ENCODE measurements at regions of chr12 and their contacts with region 1.

Region 1: GRCh38 chr12:47904713-47905310 is at the start of gene VDR:
- DNase-seq: peak; percentile 90 to 91 (median 91)
- ATAC-seq: peak; percentile 70
- H3K4me3 ChIP-seq: peak within 1 kb of the TSS; percentile 36
- H3K4me1 ChIP-seq: peaks cover 53% of the 10 kb centered on the region
- CTCF ChIP-seq: no peak
- total RNA-seq, gene VDR: 69.5 to 175 (median 162) TPM

Region 2: DNA sequence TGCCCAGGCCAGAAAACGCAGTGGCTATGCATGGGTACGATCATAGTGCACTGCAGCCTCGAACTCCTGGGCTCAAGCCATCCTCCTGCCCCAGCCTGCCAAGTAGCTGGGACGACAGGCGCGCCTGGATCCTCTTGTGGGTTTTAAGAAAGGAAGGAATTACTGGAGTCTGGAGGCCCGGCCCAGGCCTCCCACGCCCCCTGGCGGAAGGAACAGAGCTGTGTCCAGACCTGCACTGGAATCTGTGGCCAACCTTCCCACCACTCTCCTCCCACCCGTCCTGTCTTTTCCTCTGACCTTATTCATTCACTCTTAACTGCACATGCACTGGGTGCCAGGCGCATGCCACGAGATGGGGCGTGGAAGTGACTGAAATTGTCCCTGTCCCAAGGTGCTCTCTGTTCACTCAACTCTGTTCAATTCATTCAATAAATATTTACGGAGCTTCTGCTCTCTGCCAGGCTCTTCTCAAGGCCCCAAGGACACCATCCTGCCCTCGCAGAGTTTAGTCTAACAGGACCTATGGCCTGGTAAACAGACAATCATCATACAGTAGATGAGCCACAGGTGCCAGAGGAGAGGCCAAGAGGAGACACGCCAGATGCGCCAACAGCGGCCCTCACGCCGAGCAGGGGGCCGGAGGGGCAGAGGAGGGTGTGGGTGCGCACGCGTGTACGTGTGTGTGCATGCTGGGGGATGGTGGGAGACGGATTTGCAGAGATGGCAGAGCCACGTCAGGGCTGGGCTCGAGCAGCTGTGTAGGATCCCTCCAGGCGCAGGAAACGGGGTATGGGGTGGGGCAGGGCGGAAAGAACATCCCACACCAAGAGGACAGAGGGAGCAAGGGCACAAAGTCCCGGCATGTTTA is 44.9 kb after region 1 on chr12:
- intact Hi-C with region 1: loop called in 1 of 2 experiments (anchors 10 kb)
- DNase-seq: peak; percentile 86 to 90 (median 89)
- ATAC-seq: peak; percentile 86
- H3K4me3 ChIP-seq: no peak overlapping the region
- H3K4me1 ChIP-seq: peaks cover 35% of the 10 kb centered on the region
- CTCF ChIP-seq: peak; percentile 77